ENCODE measurements at regions of chr19 and their contacts with region 1.

Region 1: DNA sequence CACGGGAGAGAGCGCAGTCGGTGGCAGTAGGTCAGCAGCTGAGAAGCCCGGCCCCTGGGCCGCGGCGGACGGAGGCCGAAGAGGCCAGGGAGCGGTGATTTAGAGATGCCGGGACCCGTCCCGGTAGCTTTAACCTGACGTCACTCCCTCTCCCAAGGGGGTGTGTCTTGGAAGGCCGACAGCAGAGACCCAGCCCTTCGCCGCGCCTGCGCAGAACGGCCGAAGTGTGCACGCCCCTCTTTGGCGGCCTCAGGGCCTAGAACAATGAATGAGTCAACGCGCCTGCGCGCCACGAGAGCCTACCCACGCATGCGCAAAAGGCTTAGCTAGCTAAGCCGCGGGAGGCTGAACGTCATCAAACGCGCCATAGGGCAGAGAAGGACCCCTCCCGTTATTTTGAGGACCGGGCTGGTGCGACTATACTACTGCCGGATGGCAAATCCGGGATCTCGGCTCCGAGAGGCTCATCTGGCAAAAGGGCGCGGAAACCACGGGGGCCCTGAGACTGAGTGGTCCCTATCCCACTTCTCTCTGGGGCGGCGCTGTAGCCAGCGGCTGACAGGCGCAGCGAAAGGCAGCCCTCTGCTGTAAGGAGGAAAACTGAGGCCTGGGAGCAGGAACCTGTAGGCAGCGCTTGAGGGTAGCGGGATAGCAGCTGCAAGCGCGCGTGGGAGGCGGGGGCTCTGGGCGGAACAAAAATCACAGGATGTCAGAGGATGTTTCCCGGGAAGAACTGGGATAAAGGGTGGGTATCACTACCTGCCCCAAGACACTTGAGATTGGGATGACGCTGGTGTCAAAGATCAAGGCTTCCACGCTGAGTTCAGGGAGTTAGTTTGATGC is at the starts of genes IRGQ and ZNF576:
- DNase-seq: peak; percentile 100
- H3K4me3 ChIP-seq: peak within 1 kb of the TSS; percentile 58 to 71 (median 70)
- H3K27ac ChIP-seq: peak within 1 kb of the TSS; percentile 93 to 98 (median 95)
- H3K4me1 ChIP-seq: peaks cover 33 to 59% (median 50%) of the 10 kb centered on the region in 4 donors
- H3K27me3 ChIP-seq: no peaks in the 10 kb centered on the region
- CTCF ChIP-seq: peak in 1 of 3 experiments; percentile 26
- EP300 ChIP-seq: no peak
- POLR2A ChIP-seq: peak; percentile 86
- total RNA-seq, gene IRGQ: 20.3 to 36.0 (median 28.6) TPM
- total RNA-seq, gene ZNF576: 10.0 to 18.6 (median 16.6) TPM

Region 2: GRCh38 chr19:43534816-43535761 is 61.1 kb before region 1 on chr19:
- intact Hi-C with region 1: loop called (anchors 5 kb)
- DNase-seq: no peak
- H3K4me3 ChIP-seq: peak overlapping the region; percentile 51 to 75 (median 62)
- H3K27ac ChIP-seq: peak overlapping the region; percentile 88 to 94 (median 92)
- H3K4me1 ChIP-seq: peaks cover 26 to 40% (median 38%) of the 10 kb centered on the region in 4 donors
- H3K27me3 ChIP-seq: no peaks in the 10 kb centered on the region
- CTCF ChIP-seq: peak; percentile 55 to 70 (median 70)
- EP300 ChIP-seq: no peak
- POLR2A ChIP-seq: no peak

Region 3: GRCh38 chr19:43575156-43575950 is 20.9 kb before region 1 on chr19 and contains the starts of genes PINLYP and XRCC1:
- intact Hi-C with region 1: loop called (anchors 2 kb)
- DNase-seq: peak; percentile 99
- H3K4me3 ChIP-seq: peak within 1 kb of the TSS; percentile 71 to 84 (median 78)
- H3K27ac ChIP-seq: peak within 1 kb of the TSS; percentile 82 to 89 (median 87)
- H3K4me1 ChIP-seq: peaks cover 13 to 36% (median 32%) of the 10 kb centered on the region in 4 donors
- H3K27me3 ChIP-seq: no peaks in the 10 kb centered on the region
- CTCF ChIP-seq: no peak
- EP300 ChIP-seq: no peak
- POLR2A ChIP-seq: peak; percentile 51
- total RNA-seq, gene PINLYP: 3.3 to 6.2 (median 4.9) TPM
- total RNA-seq, gene XRCC1: 21.2 to 27.2 (median 24.4) TPM

Region 4: GRCh38 chr19:43651758-43652545 is 55.7 kb after region 1 on chr19:
- intact Hi-C with region 1: loop called (anchors 2 kb)
- DNase-seq: no peak
- H3K4me3 ChIP-seq: no peak overlapping the region
- H3K27ac ChIP-seq: peak overlapping the region in 3 of 4 donors; percentile 9 to 58 (median 33)
- H3K4me1 ChIP-seq: peaks cover 0 to 12% (median 9%) of the 10 kb centered on the region in 4 donors
- H3K27me3 ChIP-seq: no peaks in the 10 kb centered on the region
- CTCF ChIP-seq: peak; percentile 75 to 82 (median 82)
- EP300 ChIP-seq: no peak
- POLR2A ChIP-seq: no peak